ENCODE measurements at regions of chr22 and their contacts with region 1.

Region 1: DNA sequence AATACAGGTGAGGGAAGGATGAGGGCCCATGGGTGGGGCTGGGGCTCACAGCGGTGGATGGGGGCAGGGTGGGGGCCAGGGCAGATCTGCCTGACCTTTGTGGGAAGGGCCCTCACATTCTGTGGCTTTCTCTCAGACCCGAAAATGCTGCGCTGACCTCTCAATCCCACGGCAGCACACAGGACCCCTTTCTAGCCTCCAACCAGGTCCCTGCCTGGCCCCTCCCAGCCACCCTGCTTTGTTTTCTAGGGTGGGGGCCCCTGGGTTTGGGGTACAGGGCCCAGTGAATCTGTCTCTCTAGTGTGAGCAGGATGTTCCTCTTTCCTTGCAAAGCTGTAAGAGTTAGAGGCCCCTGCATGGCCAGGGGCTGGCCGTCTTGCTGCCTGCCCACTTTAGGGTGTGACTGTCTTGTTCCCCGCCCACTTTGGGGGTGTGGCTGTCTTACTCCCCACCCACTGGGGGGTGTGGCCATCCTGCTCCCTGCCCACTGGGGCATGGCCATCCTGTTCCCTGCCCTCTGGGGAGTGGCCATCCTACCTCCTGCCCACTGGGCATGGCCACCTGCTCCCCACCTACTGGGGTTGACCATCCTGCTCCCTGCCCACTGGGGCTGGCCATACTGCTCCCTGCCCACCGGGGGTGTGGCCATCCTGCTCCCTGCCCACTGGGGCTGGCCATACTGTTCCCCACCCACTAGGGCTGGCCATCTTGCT is 11.5 kb downstream of the PARVG start:
- H3K4me3 Mint-ChIP-seq: no peak overlapping the region
- H3K27ac Mint-ChIP-seq: peak overlapping the region; percentile 39
- H3K4me1 Mint-ChIP-seq: peaks cover 65% of the 10 kb centered on the region
- H3K27me3 Mint-ChIP-seq: no peaks in the 10 kb centered on the region

Region 2: DNA sequence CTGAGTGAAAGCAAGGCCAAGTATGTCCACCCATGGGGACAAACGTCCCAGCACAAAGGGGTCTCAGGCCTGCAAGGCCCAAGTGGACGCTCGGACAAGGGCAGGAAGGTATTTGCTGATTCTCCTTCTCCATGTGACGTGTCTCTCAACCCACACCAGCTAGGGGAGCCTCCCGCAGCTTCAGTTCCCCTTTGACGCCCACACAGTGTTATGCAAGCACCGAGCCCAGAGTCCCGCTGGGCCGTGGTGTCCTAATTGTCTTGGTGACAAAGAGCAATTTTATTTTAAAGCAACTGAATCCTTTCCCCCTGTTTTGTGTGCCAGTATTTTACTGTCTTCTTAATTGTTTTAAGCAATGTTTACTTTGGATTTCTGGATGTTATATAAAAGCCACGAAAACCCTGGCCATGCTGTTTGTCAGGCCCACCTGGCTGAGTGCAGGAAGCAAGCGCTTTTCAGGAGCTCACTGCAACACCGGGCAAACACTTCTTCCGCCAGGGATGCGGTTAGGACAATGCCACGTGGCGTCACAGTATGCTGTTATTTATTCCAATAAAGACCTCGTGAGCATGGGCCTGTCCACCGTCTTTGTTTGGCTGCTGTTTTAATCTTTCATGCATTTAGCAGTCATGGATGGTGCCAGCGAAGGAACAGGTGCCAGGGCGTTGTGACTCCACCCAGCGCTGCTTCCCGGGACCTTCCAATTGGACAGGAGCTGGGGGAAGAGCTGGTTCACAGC is 19.7 kb before region 1 on chr22:
- intact Hi-C with region 1: loop called (anchors 1 kb)
- H3K4me3 Mint-ChIP-seq: peak overlapping the region; percentile 52
- H3K27ac Mint-ChIP-seq: peak overlapping the region; percentile 85
- H3K4me1 Mint-ChIP-seq: peaks cover 44% of the 10 kb centered on the region
- H3K27me3 Mint-ChIP-seq: no peaks in the 10 kb centered on the region

Measured in dendritic cell treated with granulocyte-macrophage colony-stimulating factor and Interleukin-4, amounts not matched to agents 40 ng/mL and 50 ng/mL, for 4 days (primary cell).